Activated CD8-positive, alpha-beta memory T cell treated with anti-CD3 and anti-CD28 coated beads, Interleukin-2, amount 10 ng/mL, durations not matched to agents 7 days and 5 days (primary cell): ENCODE measurements at regions of chr4 and their contacts with region 1.

Region 1: GRCh38 chr4:17817020-17817419 is 6.2 kb downstream of the NCAPG start:
- DNase-seq: no peak
- ATAC-seq: peak; percentile 79
- H3K4me3 Mint-ChIP-seq: no peak overlapping the region
- H3K27ac Mint-ChIP-seq: peak overlapping the region; percentile 68
- H3K4me1 Mint-ChIP-seq: peaks cover 47% of the 10 kb centered on the region
- H3K27me3 Mint-ChIP-seq: no peaks in the 10 kb centered on the region

Region 2: DNA sequence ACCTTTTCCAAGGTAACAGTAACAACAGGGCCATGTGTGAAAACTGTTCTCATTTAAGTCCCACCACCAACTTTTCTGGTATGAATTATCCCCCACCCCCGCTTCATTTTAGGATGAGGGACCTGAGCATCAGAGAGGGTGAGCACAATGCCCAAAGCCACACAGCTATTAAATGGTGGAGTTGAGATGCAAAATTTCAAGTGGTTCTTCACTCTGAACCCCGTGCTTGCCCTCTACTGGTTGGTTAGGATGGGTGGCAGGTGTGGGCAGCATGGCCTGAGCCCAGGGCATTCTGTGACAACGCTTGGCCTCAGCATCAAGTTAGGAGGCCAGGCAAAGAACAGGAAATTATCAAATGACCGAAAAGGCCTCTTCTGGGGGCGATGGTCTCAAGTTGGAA is 169.1 kb before region 1 on chr4:
- CTCF ChIA-PET with region 1: no interaction called
- DNase-seq: no peak
- ATAC-seq: no peak
- H3K4me3 Mint-ChIP-seq: no peak overlapping the region
- H3K27ac Mint-ChIP-seq: no peak overlapping the region
- H3K4me1 Mint-ChIP-seq: peaks cover 4% of the 10 kb centered on the region
- H3K27me3 Mint-ChIP-seq: peaks cover 3% of the 10 kb centered on the region

Region 3: GRCh38 chr4:17762726-17763125 is 54.3 kb before region 1 on chr4:
- CTCF ChIA-PET with region 1: no interaction called
- DNase-seq: no peak
- ATAC-seq: no peak
- H3K4me3 Mint-ChIP-seq: no peak overlapping the region
- H3K27ac Mint-ChIP-seq: no peak overlapping the region
- H3K4me1 Mint-ChIP-seq: peaks cover 8% of the 10 kb centered on the region
- H3K27me3 Mint-ChIP-seq: peaks cover 6% of the 10 kb centered on the region

Region 4: DNA sequence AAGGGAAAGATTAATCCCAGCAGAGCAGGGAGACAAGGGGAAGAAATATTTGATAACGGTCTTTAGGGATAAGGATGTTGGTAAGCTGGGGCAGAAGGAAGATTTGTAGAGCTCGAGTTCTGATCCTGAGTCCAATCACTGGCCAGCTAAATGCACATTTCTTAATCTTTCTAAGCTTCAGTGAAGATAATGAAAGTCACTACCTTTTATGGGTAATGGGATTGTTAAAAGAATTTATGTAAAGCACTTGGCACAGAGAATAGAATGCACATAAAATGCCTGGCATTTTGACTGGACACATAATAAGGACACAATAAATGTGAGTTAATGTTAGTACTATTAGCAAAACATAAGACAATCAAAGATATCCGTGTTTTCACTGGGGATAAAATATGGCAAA is 37.0 kb after region 1 on chr4:
- CTCF ChIA-PET with region 1: no interaction called
- DNase-seq: no peak
- ATAC-seq: no peak
- H3K4me3 Mint-ChIP-seq: no peak overlapping the region
- H3K27ac Mint-ChIP-seq: no peak overlapping the region
- H3K4me1 Mint-ChIP-seq: no peaks in the 10 kb centered on the region
- H3K27me3 Mint-ChIP-seq: no peaks in the 10 kb centered on the region

Region 5: DNA sequence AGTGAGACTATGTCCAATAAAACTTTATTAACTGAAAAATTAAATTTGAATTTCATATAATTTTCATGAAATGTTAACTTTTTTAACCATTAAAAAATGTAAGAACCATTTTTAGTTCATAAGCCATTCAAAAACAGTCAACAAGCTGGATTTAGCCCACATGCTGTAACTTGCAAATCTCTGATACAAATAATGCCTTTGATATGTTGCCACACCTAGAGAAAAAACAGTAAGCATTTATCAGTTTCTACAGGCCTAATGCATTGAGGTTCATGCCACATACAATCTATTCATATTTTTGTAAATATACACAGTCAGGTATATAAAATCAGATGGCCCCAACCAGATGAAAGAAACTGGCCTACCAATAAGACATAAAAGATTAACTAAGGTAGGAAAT is 151.7 kb after region 1 on chr4:
- CTCF ChIA-PET with region 1: no interaction called
- DNase-seq: no peak
- ATAC-seq: no peak
- H3K4me3 Mint-ChIP-seq: no peak overlapping the region
- H3K27ac Mint-ChIP-seq: no peak overlapping the region
- H3K4me1 Mint-ChIP-seq: no peaks in the 10 kb centered on the region
- H3K27me3 Mint-ChIP-seq: no peaks in the 10 kb centered on the region

Region 6: DNA sequence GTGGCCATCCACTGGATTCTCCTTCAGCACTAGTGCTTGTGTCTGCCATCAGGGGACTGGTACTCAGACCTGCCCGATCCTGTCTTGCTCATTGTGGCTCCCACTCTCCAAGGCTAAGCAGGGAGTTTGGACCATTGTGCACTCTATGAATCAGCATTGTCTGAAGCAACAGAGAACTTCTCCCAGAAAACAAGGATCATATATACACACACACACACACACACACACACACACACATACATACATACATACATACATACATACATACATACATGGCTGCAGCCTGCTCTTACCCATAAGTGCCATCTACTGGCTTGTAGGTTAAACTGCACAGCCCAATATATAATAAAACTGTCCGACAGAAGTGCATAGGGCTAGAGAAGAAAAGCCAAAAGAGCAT is 549.9 kb after region 1 on chr4:
- CTCF ChIA-PET with region 1: interaction called, 10 read pairs
- DNase-seq: no peak
- ATAC-seq: peak; percentile 69
- H3K4me3 Mint-ChIP-seq: no peak overlapping the region
- H3K27ac Mint-ChIP-seq: no peak overlapping the region
- H3K4me1 Mint-ChIP-seq: no peaks in the 10 kb centered on the region
- H3K27me3 Mint-ChIP-seq: peaks cover 5% of the 10 kb centered on the region